Naive thymus-derived CD4-positive, alpha-beta T cell (primary cell): ENCODE measurements at regions of chr11 and their contacts with region 1.

Region 1: GRCh38 chr11:20127671-20128527 is 32.4 kb downstream of the DBX1 start:
- DNase-seq: peak; percentile 27 to 74 (median 68)
- ATAC-seq: peak; percentile 81
- H3K4me3 ChIP-seq: no peak overlapping the region
- H3K4me3 Mint-ChIP-seq: no peak overlapping the region
- H3K27ac ChIP-seq: no peak overlapping the region
- H3K27ac Mint-ChIP-seq: no peak overlapping the region
- H3K4me1 ChIP-seq: no peaks in the 10 kb centered on the region
- H3K4me1 Mint-ChIP-seq: peaks cover 7 to 14% (median 12%) of the 10 kb centered on the region in 7 donors
- H3K27me3 ChIP-seq: no peaks in the 10 kb centered on the region
- H3K27me3 Mint-ChIP-seq: peaks cover 7 to 23% (median 15%) of the 10 kb centered on the region in 5 donors

Region 2: GRCh38 chr11:19071255-19071654 is 1056.6 kb before region 1 on chr11:
- CTCF ChIA-PET with region 1: no interaction called
- POLR2A ChIA-PET with region 1: no interaction called
- intact Hi-C with region 1: loop called in 1 of 2 experiments (anchors 2 kb)
- DNase-seq: peak in 8 of 9 donors; percentile 27 to 51 (median 38)
- ATAC-seq: peak; percentile 93
- H3K4me3 ChIP-seq: no peak overlapping the region
- H3K4me3 Mint-ChIP-seq: peak overlapping the region in 8 of 10 donors; percentile 37 to 83 (median 64)
- H3K27ac ChIP-seq: no peak overlapping the region
- H3K27ac Mint-ChIP-seq: no peak overlapping the region
- H3K4me1 ChIP-seq: no peaks in the 10 kb centered on the region
- H3K4me1 Mint-ChIP-seq: peaks cover 0 to 5% (median 5%) of the 10 kb centered on the region in 7 donors
- H3K27me3 ChIP-seq: no peaks in the 10 kb centered on the region
- H3K27me3 Mint-ChIP-seq: peaks cover 14 to 33% (median 20%) of the 10 kb centered on the region in 5 donors

Region 3: GRCh38 chr11:19951558-19952115 is 176.3 kb before region 1 on chr11:
- CTCF ChIA-PET with region 1: interaction called, 3 read pairs
- POLR2A ChIA-PET with region 1: no interaction called
- intact Hi-C with region 1: loop called (anchors 1 kb)
- DNase-seq: peak in 5 of 9 donors; percentile 19 to 30 (median 25)
- ATAC-seq: peak; percentile 68
- H3K4me3 ChIP-seq: no peak overlapping the region
- H3K4me3 Mint-ChIP-seq: peak overlapping the region in 9 of 10 donors; percentile 60 to 83 (median 73)
- H3K27ac ChIP-seq: no peak overlapping the region
- H3K27ac Mint-ChIP-seq: no peak overlapping the region
- H3K4me1 ChIP-seq: no peaks in the 10 kb centered on the region
- H3K4me1 Mint-ChIP-seq: peaks cover 0 to 9% (median 6%) of the 10 kb centered on the region in 7 donors
- H3K27me3 ChIP-seq: no peaks in the 10 kb centered on the region
- H3K27me3 Mint-ChIP-seq: peaks cover 7 to 38% (median 24%) of the 10 kb centered on the region in 5 donors

Region 4: GRCh38 chr11:20337526-20338154 is 209.7 kb after region 1 on chr11:
- CTCF ChIA-PET with region 1: interaction called, 4 read pairs
- POLR2A ChIA-PET with region 1: no interaction called
- intact Hi-C with region 1: loop called in 1 of 2 experiments (anchors 1 kb)
- DNase-seq: no peak
- ATAC-seq: no peak
- H3K4me3 ChIP-seq: no peak overlapping the region
- H3K4me3 Mint-ChIP-seq: no peak overlapping the region
- H3K27ac ChIP-seq: no peak overlapping the region
- H3K27ac Mint-ChIP-seq: no peak overlapping the region
- H3K4me1 ChIP-seq: no peaks in the 10 kb centered on the region
- H3K4me1 Mint-ChIP-seq: peaks cover 0 to 9% (median 4%) of the 10 kb centered on the region in 7 donors
- H3K27me3 ChIP-seq: peaks cover 0 to 5% of the 10 kb centered on the region in 2 donors
- H3K27me3 Mint-ChIP-seq: peaks cover 47 to 75% (median 68%) of the 10 kb centered on the region in 5 donors

Region 5: GRCh38 chr11:20443596-20443995 is 315.7 kb after region 1 on chr11:
- CTCF ChIA-PET with region 1: no interaction called
- POLR2A ChIA-PET with region 1: no interaction called
- intact Hi-C with region 1: loop called (anchors 1 to 10 kb)
- DNase-seq: peak in 4 of 9 donors; percentile 1 to 4 (median 2)
- ATAC-seq: no peak
- H3K4me3 ChIP-seq: no peak overlapping the region
- H3K4me3 Mint-ChIP-seq: no peak overlapping the region
- H3K27ac ChIP-seq: no peak overlapping the region
- H3K27ac Mint-ChIP-seq: no peak overlapping the region
- H3K4me1 ChIP-seq: no peaks in the 10 kb centered on the region
- H3K4me1 Mint-ChIP-seq: peaks cover 0 to 6% (median under 1%) of the 10 kb centered on the region in 7 donors
- H3K27me3 ChIP-seq: no peaks in the 10 kb centered on the region
- H3K27me3 Mint-ChIP-seq: no peaks in the 10 kb centered on the region

Region 6: GRCh38 chr11:20671856-20672546 is 544.1 kb after region 1 on chr11:
- CTCF ChIA-PET with region 1: no interaction called
- POLR2A ChIA-PET with region 1: no interaction called
- intact Hi-C with region 1: loop called in 1 of 2 experiments (anchors 2 kb)
- DNase-seq: no peak
- ATAC-seq: no peak
- H3K4me3 ChIP-seq: no peak overlapping the region
- H3K4me3 Mint-ChIP-seq: no peak overlapping the region
- H3K27ac ChIP-seq: no peak overlapping the region
- H3K27ac Mint-ChIP-seq: no peak overlapping the region
- H3K4me1 ChIP-seq: no peaks in the 10 kb centered on the region
- H3K4me1 Mint-ChIP-seq: peaks cover 0 to 19% (median 10%) of the 10 kb centered on the region in 7 donors
- H3K27me3 ChIP-seq: peaks cover 0 to 9% of the 10 kb centered on the region in 2 donors
- H3K27me3 Mint-ChIP-seq: peaks cover 55 to 88% (median 75%) of the 10 kb centered on the region in 5 donors